ENCODE measurements at regions of chr2 and their contacts with region 1.

Region 1: DNA sequence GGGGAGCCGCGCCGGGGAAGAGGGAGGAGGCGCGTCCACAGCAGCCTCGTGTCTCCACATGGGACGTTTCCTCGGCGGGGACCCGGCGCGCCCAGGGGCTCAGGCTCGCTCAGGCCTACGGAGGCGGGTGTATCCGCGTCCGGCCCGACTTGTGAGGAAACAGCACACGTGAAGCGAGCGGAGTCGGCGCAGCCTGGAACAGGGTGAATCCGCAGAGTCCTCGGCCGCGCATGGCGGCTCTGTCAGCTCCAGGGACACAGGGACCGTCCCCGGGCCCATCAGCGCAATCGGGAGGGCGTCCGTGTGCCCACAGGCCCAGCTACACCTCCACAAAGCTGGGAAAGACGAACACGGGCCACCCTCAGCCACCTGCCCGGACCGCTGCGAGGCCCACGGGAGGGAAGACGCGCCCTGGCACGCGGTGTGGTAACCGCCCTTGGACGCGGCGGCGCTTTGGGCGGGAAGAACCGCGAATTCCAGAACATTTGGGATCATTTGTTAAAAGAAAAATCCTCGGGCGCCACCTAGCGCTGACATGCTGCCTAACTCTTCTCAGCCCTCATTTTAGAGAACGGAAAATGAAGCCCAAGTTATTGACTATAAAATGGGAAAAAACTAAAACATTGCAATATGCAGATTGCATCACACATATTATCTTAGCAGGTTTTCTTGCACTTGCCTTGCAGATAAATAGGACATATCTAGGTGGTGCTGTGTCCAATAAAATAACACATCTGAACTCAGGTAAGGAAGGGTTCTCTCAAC is 40.4 kb downstream of the TMEM18 start:
- DNase-seq: peak; percentile 72
- ATAC-seq: peak; percentile 76
- H3K4me3 Mint-ChIP-seq: peak overlapping the region; percentile 51
- H3K27ac Mint-ChIP-seq: no peak overlapping the region
- H3K4me1 Mint-ChIP-seq: peaks cover 6% of the 10 kb centered on the region
- H3K27me3 Mint-ChIP-seq: no peaks in the 10 kb centered on the region

Region 2: GRCh38 chr2:529425-529824 is 107.4 kb before region 1 on chr2:
- CTCF ChIA-PET with region 1: interaction called, 7 read pairs
- POLR2A ChIA-PET with region 1: no interaction called
- intact Hi-C with region 1: loop called (anchors 1 to 5 kb)
- DNase-seq: no peak
- ATAC-seq: no peak
- H3K4me3 Mint-ChIP-seq: no peak overlapping the region
- H3K27ac Mint-ChIP-seq: no peak overlapping the region
- H3K4me1 Mint-ChIP-seq: no peaks in the 10 kb centered on the region
- H3K27me3 Mint-ChIP-seq: peaks cover 5% of the 10 kb centered on the region